ENCODE measurements at regions of chr1 and their contacts with region 1.

Region 1: DNA sequence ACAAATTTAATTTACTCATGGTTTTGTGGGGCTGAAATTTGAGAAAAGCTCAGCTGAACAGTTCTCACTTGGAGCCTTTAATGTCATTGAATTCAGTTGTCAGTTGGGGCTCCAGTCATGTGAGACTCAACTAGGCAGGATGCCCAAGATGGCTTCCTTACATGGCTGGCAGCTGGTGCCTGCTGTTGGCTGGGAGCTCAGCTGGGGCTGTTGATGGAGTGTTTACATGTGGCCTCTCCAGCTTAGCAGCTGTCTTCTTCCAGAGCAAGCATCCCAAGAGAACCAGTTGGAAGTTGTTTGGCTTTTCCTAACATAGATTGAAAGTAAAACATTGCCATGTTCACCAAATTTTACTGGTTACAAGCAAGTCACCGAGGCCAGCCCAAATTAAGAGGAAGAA is 81.8 kb upstream of the KCNA3 start:
- DNase-seq: no peak
- H3K4me3 ChIP-seq: no peak overlapping the region
- H3K27ac ChIP-seq: no peak overlapping the region
- H3K4me1 ChIP-seq: no peaks in the 10 kb centered on the region
- H3K27me3 ChIP-seq: no peaks in the 10 kb centered on the region
- CTCF ChIP-seq: no peak

Region 2: DNA sequence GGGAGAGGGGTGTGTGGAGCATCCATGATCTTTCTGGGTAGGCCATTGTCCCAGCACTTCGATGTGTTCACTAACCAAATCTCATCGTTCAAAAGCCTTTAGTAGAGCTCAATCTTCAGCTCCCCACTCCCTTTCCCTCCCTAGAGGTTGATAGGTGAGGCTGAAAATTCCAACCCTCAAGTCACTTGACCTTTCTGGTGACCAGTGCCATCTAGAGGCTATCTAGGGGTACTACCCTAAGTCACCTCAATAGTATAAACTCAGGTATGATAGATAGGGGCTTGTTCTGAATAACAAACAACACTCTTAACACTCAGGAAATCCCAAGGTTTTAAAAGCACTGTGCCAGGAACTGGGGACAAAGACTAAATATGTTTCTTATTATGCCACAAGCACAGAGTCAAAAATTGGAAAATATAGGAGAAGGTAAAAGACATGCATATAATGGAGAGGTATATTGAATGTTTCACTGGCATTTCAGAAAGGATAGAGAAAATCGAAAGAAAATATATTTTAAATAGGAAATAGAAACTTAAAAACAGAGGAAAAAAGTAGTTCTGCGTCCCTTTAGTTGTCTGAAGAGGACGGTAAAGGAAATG is 73.5 kb after region 1 on chr1:
- intact Hi-C with region 1: loop called (anchors 2 kb)
- DNase-seq: no peak
- H3K4me3 ChIP-seq: no peak overlapping the region
- H3K27ac ChIP-seq: no peak overlapping the region
- H3K4me1 ChIP-seq: no peaks in the 10 kb centered on the region
- H3K27me3 ChIP-seq: no peaks in the 10 kb centered on the region
- CTCF ChIP-seq: peak in 2 of 3 experiments; percentile 5 to 26

Region 3: GRCh38 chr1:111052246-111052645 is 295.7 kb after region 1 on chr1:
- intact Hi-C with region 1: no loop called
- DNase-seq: no peak
- H3K4me3 ChIP-seq: no peak overlapping the region
- H3K27ac ChIP-seq: no peak overlapping the region
- H3K4me1 ChIP-seq: no peaks in the 10 kb centered on the region
- H3K27me3 ChIP-seq: no peaks in the 10 kb centered on the region
- CTCF ChIP-seq: no peak

Measured in ascending aorta (tissue), 2 donors.